Activated B cell treated with CpG ODN at 0.5 μM for 24 hours (primary cell): ENCODE measurements at regions of chr15 and their contacts with region 1.

Region 1: GRCh38 chr15:64809649-64810496 is 15.6 kb downstream of the PIF1 start:
- DNase-seq: peak; percentile 61
- ATAC-seq: peak; percentile 43
- H3K4me3 Mint-ChIP-seq: no peak overlapping the region
- H3K27ac Mint-ChIP-seq: no peak overlapping the region
- H3K4me1 Mint-ChIP-seq: peaks cover 25% of the 10 kb centered on the region
- H3K27me3 Mint-ChIP-seq: no peaks in the 10 kb centered on the region
- CTCF ChIP-seq: peak; percentile 90

Region 2: DNA sequence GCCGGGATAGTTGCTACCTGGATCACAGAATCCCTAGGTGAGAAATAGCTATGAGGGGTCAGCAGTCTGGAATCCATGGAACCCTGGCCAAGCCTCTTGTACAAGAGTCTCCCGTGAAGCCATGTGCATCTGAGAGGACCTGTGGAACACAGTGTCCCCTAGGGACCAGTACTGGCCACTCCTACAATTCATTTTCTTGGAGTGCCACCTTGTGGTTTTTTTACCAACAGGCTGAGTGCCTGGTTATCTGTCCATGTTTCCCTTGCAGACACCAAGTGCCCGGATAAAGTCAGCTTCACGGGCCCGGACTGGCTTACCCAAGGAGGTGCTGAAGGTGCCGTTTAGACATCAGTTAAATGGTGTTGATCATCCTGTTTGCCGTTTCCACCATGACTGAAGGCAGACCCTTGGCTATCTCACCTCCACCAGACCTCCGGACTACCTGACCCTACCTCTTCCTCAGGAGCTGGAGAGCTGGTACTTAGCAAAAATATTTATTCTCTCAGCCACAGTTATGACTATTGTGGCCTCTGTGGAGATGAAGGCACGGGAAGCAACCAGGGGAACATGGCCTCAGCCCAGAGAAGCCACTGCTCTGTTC is 128.3 kb before region 1 on chr15:
- CTCF ChIA-PET with region 1: interaction called, 22 read pairs
- POLR2A ChIA-PET with region 1: no interaction called
- intact Hi-C with region 1: loop called (anchors 2 kb)
- DNase-seq: no peak
- ATAC-seq: peak; percentile 28
- H3K4me3 Mint-ChIP-seq: no peak overlapping the region
- H3K27ac Mint-ChIP-seq: no peak overlapping the region
- H3K4me1 Mint-ChIP-seq: no peaks in the 10 kb centered on the region
- H3K27me3 Mint-ChIP-seq: no peaks in the 10 kb centered on the region
- CTCF ChIP-seq: no peak

Region 3: GRCh38 chr15:64720188-64720587 is 89.7 kb before region 1 on chr15:
- CTCF ChIA-PET with region 1: no interaction called
- POLR2A ChIA-PET with region 1: no interaction called
- intact Hi-C with region 1: no loop called
- DNase-seq: no peak
- ATAC-seq: no peak
- H3K4me3 Mint-ChIP-seq: no peak overlapping the region
- H3K27ac Mint-ChIP-seq: no peak overlapping the region
- H3K4me1 Mint-ChIP-seq: no peaks in the 10 kb centered on the region
- H3K27me3 Mint-ChIP-seq: peaks cover 2% of the 10 kb centered on the region
- CTCF ChIP-seq: no peak

Region 4: DNA sequence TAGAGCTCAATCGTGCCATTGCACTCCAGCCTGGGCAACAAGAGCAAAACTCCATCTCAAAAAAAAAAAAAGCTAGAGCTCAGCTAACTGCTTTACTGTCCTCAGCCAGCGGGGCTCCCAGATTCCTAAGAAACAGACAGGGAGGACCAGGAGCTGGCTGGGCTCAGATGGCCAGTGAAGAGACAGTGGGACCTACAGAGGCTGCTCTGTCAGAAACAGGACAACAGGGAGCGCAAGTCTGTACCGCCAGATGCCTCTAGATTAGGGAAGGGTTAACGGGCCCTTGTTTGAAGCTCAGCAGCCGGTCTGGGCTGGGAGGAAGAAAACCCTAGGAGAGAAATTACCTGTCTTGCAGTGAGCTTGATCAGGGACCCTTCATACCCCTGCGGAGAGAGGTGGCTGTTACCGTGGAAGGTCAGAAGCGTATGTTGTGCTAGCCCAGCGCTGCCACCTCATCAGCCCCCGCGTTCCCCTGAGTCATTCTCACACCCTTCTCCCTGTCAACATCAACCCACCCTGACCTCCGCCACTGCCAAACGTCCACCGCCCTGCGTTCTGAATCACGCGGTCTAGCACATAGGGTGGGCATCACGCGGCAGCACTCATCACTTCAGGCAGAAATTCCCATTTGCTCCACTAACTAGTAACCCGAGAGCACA is 59.7 kb before region 1 on chr15:
- CTCF ChIA-PET with region 1: interaction called, 4 read pairs
- POLR2A ChIA-PET with region 1: no interaction called
- intact Hi-C with region 1: loop called (anchors 5 kb)
- DNase-seq: no peak
- ATAC-seq: no peak
- H3K4me3 Mint-ChIP-seq: no peak overlapping the region
- H3K27ac Mint-ChIP-seq: no peak overlapping the region
- H3K4me1 Mint-ChIP-seq: peaks cover 30% of the 10 kb centered on the region
- H3K27me3 Mint-ChIP-seq: no peaks in the 10 kb centered on the region
- CTCF ChIP-seq: no peak

Region 5: GRCh38 chr15:64825431-64826294 is 15.8 kb after region 1 on chr15 and contains the start of gene PIF1:
- CTCF ChIA-PET with region 1: interaction called, 5 read pairs
- POLR2A ChIA-PET with region 1: interaction called, 3 read pairs
- intact Hi-C with region 1: loop called (anchors 1 kb)
- DNase-seq: peak; percentile 60
- ATAC-seq: peak; percentile 94
- H3K4me3 Mint-ChIP-seq: peak within 1 kb of the TSS; percentile 84
- H3K27ac Mint-ChIP-seq: peak within 1 kb of the TSS; percentile 87
- H3K4me1 Mint-ChIP-seq: peaks cover 31% of the 10 kb centered on the region
- H3K27me3 Mint-ChIP-seq: no peaks in the 10 kb centered on the region
- CTCF ChIP-seq: no peak
- total RNA-seq, gene PIF1: 3.3 and 5.5 TPM in 2 replicates

Region 6: GRCh38 chr15:64905119-64905831 is 95.4 kb after region 1 on chr15:
- CTCF ChIA-PET with region 1: interaction called, 39 read pairs
- POLR2A ChIA-PET with region 1: no interaction called
- intact Hi-C with region 1: loop called (anchors 1 kb)
- DNase-seq: peak; percentile 78
- ATAC-seq: peak; percentile 98
- H3K4me3 Mint-ChIP-seq: peak overlapping the region; percentile 82
- H3K27ac Mint-ChIP-seq: peak overlapping the region; percentile 66
- H3K4me1 Mint-ChIP-seq: peaks cover 41% of the 10 kb centered on the region
- H3K27me3 Mint-ChIP-seq: peaks cover 2% of the 10 kb centered on the region
- CTCF ChIP-seq: peak; percentile 59

Region 7: GRCh38 chr15:64979252-64979710 is 169.4 kb after region 1 on chr15:
- CTCF ChIA-PET with region 1: no interaction called
- POLR2A ChIA-PET with region 1: no interaction called
- intact Hi-C with region 1: no loop called
- DNase-seq: no peak
- ATAC-seq: no peak
- H3K4me3 Mint-ChIP-seq: no peak overlapping the region
- H3K27ac Mint-ChIP-seq: no peak overlapping the region
- H3K4me1 Mint-ChIP-seq: peaks cover 5% of the 10 kb centered on the region
- H3K27me3 Mint-ChIP-seq: no peaks in the 10 kb centered on the region
- CTCF ChIP-seq: no peak